ENCODE measurements at regions of chr17 and their contacts with region 1.

Region 1: GRCh38 chr17:69567130-69567529 is 152.6 kb downstream of the MAP2K6 start:
- DNase-seq: no peak
- H3K4me3 ChIP-seq: no peak overlapping the region
- H3K27ac ChIP-seq: no peak overlapping the region
- H3K4me1 ChIP-seq: peaks cover 0 to 11% (median 4%) of the 10 kb centered on the region in 6 donors
- H3K27me3 ChIP-seq: no peaks in the 10 kb centered on the region
- CTCF ChIP-seq: no peak
- POLR2A ChIP-seq: no peak

Region 2: GRCh38 chr17:69501591-69502468 is 65.3 kb before region 1 on chr17:
- intact Hi-C with region 1: no loop called
- DNase-seq: no peak
- H3K4me3 ChIP-seq: peak overlapping the region in 5 of 8 donors; percentile 3 to 53 (median 9)
- H3K27ac ChIP-seq: peak overlapping the region in 6 of 8 donors; percentile 12 to 81 (median 63)
- H3K4me1 ChIP-seq: peaks cover 0 to 56% (median 33%) of the 10 kb centered on the region in 6 donors
- H3K27me3 ChIP-seq: no peaks in the 10 kb centered on the region
- CTCF ChIP-seq: no peak
- POLR2A ChIP-seq: no peak

Region 3: DNA sequence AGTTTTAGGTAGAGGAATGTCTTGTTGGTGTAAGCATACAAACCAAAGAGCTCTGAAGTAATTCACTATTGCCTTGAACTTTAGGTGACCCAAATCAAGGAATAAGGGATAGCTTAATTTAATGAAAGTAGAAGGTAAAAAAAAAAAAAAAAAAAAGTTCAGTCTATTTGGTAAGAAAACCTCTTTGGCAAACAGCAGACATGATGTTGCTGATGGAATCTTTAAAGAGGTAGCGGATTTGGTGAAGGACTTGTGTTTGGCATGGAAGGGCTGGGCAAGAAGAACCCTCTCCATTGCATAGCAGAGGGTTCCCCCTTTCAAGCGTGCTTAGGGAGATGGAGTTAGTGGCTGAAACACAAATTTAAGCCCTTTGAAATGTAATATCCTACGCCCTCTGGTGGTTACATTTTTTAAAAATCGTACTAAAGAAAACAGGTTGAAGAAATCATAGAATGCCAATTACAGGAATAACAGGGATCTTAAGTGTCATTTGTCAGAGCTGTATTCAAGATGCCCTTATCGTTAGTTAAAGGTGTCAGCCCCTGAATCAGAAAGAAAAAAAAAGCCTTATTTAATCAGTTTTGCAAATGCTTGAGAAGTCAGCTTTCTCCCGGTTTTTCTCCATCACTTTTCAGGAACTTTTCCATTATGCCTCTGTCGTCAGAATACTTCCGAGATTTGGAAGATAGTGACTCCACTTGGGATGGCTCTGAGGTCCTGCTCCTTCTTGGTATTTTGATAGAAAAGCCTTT is 985.3 kb after region 1 on chr17:
- intact Hi-C with region 1: loop called (anchors 5 kb)
- DNase-seq: no peak
- H3K4me3 ChIP-seq: no peak overlapping the region
- H3K27ac ChIP-seq: no peak overlapping the region
- H3K4me1 ChIP-seq: peaks cover 0 to 6% (median 0%) of the 10 kb centered on the region in 6 donors
- H3K27me3 ChIP-seq: no peaks in the 10 kb centered on the region
- CTCF ChIP-seq: peak in 9 of 11 experiments; percentile 8 to 57 (median 45)
- POLR2A ChIP-seq: no peak